Right cardiac atrium (tissue), 5 donors: ENCODE measurements at regions of chr17 and their contacts with region 1.

Region 1: GRCh38 chr17:79087428-79088143 is 13.0 kb downstream of the ENGASE start:
- DNase-seq: peak; percentile 61 to 89 (median 86)
- ATAC-seq: peak; percentile 54 to 58
- H3K4me3 ChIP-seq: no peak overlapping the region
- H3K27ac ChIP-seq: no peak overlapping the region
- H3K4me1 ChIP-seq: peaks cover 3% of the 10 kb centered on the region
- H3K27me3 ChIP-seq: no peaks in the 10 kb centered on the region

Region 2: DNA sequence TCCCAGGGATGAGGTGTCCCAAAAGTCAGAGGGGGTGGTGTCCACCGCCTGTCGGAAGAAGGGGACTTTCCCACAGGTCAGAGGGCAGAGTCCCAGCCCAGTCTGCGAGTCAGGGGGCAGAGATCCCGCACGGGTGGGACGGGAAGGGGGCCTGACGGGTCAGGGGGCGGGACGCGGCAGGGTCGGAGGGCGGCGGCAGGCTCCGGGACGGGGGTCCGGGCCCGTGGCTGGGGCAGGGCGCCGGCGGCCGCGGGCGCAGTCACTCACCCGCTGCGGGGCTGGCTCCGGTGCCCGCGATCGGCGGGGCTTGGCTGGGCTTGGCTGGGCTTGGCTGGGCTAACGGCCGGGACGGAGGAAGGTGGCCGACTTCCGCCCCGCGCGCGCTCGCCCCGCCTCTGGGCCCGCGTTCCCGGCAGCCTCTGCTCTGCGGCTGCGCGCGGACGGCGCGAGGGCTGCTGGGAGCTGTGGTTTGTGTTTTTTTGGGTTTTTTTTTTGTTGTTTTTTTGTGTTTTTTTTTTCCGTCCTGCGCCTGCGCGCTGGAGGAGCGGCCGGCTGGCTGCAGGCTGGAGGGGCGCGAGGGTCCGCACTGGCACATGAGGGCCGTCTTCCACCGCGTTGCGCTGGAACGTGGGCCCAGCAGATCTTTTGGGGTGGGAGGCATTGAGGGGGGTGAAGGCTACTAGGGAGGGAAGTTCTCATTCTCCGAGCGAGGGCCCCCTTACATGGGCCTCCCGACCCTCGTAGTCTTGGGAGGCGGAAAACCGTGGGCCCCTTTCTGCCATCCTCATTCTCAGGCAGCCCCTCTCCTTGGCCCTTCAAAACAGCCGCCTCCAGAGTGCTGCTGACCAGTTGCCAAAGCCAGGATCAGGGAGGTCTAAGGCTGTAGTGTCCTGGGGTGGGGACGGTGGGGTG is 77.9 kb before region 1 on chr17 and contains the start of gene CANT1:
- intact Hi-C with region 1: loop called in 1 of 4 experiments (anchors 10 kb)
- DNase-seq: peak; percentile 88 to 95 (median 95)
- ATAC-seq: peak; percentile 91 to 96
- H3K4me3 ChIP-seq: peak within 1 kb of the TSS; percentile 86
- H3K27ac ChIP-seq: peak within 1 kb of the TSS; percentile 85
- H3K4me1 ChIP-seq: peaks cover 22% of the 10 kb centered on the region
- H3K27me3 ChIP-seq: no peaks in the 10 kb centered on the region
- total RNA-seq, gene CANT1: 28.1 to 38.8 (median 33.3) TPM

Region 3: DNA sequence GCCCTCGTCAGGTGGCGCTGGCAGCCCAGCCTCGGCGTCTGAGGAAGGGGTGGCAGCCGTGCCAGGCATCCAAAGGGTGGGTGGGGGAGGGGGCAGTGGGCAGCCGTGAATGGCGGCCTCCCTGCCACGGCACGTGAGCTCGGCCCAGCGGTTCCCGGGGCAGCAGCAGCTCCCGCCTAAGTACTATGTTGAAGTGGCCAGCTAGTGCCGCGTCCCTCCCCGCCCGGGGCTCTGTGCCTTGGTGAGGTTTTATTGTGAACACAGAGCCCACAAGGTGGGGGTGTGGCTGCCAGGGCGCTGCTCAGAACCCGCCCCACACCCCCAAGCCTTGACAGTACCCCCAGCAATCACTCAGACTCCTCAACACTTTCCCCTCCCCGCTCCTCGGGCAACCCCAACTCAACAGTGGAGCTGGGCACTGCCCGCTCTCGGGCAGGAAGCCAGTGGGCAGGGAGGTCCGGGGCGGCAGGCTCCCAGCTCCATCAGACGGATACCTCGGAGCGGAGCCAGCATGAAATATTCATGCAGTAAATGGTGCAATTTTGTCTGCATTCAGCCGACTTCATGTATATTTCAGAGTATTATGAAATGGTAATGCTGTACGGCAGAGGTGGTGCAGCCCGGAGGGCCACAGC is 67.5 kb after region 1 on chr17:
- intact Hi-C with region 1: no loop called
- DNase-seq: no peak
- ATAC-seq: no peak
- H3K4me3 ChIP-seq: no peak overlapping the region
- H3K27ac ChIP-seq: no peak overlapping the region
- H3K4me1 ChIP-seq: no peaks in the 10 kb centered on the region
- H3K27me3 ChIP-seq: no peaks in the 10 kb centered on the region